H1 (cell line): ENCODE measurements at regions of chr11 and their contacts with region 1.

Region 1: GRCh38 chr11:92340839-92341238 is 116.2 kb downstream of the FAT3 start:
- DNase-seq: peak in 1 of 2 experiments; percentile 78
- H3K4me3 ChIP-seq: no peak overlapping the region
- H3K27ac ChIP-seq: no peak overlapping the region
- H3K4me1 ChIP-seq: no peaks in the 10 kb centered on the region
- H3K27me3 ChIP-seq: no peaks in the 10 kb centered on the region
- CTCF ChIP-seq: peak; percentile 66 to 86 (median 70)
- EP300 ChIP-seq: no peak
- POLR2A ChIP-seq: no peak
- RAD21 ChIP-seq: peak; percentile 68 to 78

Region 2: DNA sequence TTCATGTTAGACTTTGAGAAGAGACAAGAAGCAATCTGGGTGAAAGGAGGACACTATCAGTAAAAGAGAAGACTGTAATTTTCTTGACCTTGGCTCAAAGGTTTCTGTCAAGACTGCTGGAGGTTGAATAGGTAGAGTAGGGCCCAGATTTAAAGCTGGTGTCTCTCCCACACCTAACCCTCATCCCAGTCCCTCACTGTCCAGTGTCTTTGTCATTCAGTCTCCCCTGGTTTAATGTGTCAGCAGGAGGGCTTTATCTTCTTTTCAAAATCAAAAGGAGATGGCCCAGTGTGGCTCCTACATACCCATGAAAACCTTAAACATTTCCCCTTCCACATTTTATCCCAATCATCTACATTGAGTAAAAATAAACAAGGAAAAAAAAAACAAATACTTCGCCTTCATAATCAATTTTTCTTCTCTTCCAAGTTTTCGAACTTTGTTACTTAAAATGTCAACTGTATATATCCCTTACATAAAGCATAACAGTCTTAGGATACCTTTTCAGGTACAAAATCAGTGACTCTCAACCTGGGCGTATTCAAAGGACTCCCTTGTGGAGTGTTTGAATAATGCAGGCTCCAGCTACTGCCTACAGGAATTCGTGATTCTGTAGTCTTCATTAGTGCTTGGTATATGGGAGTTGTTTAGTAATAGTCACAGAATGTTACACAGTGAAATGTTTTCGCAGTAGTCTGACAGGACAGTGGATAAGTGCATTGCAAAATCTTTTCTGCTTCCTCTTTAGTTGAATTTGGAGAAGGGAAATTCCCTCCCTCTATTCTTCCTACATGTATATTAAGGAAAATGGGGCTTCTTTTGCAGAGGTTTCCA is 29.0 kb before region 1 on chr11:
- CTCF ChIA-PET with region 1: interaction called, 11 read pairs
- POLR2A ChIA-PET with region 1: interaction called, 3 read pairs
- DNase-seq: peak in 1 of 2 experiments; percentile 39
- H3K4me3 ChIP-seq: peak overlapping the region in 1 of 4 experiments; percentile 46; a peak in 2 of 8 replicates
- H3K27ac ChIP-seq: no peak overlapping the region
- H3K4me1 ChIP-seq: peaks cover 2 to 46% (median 36%) of the 10 kb centered on the region in 4 experiments
- H3K27me3 ChIP-seq: no peaks in the 10 kb centered on the region
- CTCF ChIP-seq: peak in 2 of 3 experiments; percentile 25 to 53; a peak in 2 of 4 replicates
- EP300 ChIP-seq: peak in 1 of 2 experiments; percentile 12; a peak in 1 of 3 replicates
- POLR2A ChIP-seq: no peak
- RAD21 ChIP-seq: peak; percentile 26 to 43; a peak in 3 of 4 replicates

Region 3: DNA sequence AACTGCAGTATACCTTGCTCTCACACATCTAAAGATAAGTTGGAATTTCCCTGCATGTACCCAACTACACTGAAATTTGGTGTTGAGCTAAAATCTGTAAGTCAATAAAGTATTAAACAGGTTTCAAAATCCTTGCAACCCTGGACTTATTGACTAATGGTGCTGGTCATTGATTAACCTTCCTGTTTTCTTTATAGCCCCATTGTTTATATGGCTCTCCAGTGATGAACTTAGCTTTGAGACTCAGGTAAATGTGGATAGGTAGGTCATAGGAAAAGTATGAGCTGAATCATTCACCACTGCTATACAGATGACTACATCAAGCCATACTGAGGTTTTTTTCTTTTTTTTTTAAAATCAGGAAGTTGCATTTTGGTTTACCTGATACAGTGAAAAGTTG is 16.5 kb after region 1 on chr11:
- CTCF ChIA-PET with region 1: interaction called, 21 read pairs
- POLR2A ChIA-PET with region 1: no interaction called
- DNase-seq: no peak
- H3K4me3 ChIP-seq: no peak overlapping the region
- H3K27ac ChIP-seq: no peak overlapping the region
- H3K4me1 ChIP-seq: 0 out of 7 replicates have a peak, but pooled peaks cover 0 to 2% (median 0%) of the 10 kb centered on the region in 4 experiments
- H3K27me3 ChIP-seq: no peaks in the 10 kb centered on the region
- CTCF ChIP-seq: no peak
- EP300 ChIP-seq: no peak
- POLR2A ChIP-seq: no peak
- RAD21 ChIP-seq: no peak

Region 4: GRCh38 chr11:92376146-92376599 is 35.3 kb after region 1 on chr11:
- CTCF ChIA-PET with region 1: interaction called, 11 read pairs
- POLR2A ChIA-PET with region 1: no interaction called
- DNase-seq: no peak
- H3K4me3 ChIP-seq: no peak overlapping the region
- H3K27ac ChIP-seq: no peak overlapping the region
- H3K4me1 ChIP-seq: peaks cover 0 to 7% (median 1%) of the 10 kb centered on the region in 4 experiments; a peak in 1 of 7 replicates
- H3K27me3 ChIP-seq: no peaks in the 10 kb centered on the region
- CTCF ChIP-seq: no peak
- EP300 ChIP-seq: no peak
- POLR2A ChIP-seq: no peak
- RAD21 ChIP-seq: no peak

Region 5: DNA sequence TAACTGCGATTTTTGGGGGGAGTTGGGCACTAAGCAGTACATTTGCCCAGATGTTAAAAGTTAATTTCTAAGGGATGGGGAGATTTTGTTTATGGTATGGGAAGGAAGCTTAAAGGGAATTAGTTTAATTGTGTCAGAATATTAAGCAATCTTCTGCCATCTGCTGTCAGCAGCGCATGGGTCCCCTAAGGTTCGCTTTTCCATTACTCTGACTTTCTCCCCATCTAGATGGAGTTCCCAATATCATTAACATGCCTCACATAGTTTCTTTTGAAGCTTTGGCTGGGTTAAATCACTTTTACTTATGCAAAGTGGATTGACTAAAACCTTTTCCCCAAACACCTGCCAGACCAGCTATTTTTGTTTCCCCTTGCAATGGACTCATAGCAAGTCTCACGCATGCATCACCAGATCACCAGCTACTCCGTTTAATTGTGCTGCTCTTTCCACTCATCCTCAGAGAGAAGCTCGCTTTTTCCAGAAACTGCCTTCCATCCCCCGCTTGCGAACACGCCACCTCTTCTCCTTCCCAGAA is 56.4 kb after region 1 on chr11:
- CTCF ChIA-PET with region 1: interaction called, 10 read pairs
- POLR2A ChIA-PET with region 1: no interaction called
- DNase-seq: no peak
- H3K4me3 ChIP-seq: no peak overlapping the region
- H3K27ac ChIP-seq: no peak overlapping the region
- H3K4me1 ChIP-seq: peaks cover 2 to 7% (median 3%) of the 10 kb centered on the region in 4 experiments; a peak in 4 of 7 replicates
- H3K27me3 ChIP-seq: no peaks in the 10 kb centered on the region
- CTCF ChIP-seq: 0 out of 4 replicates have a peak, but pooled peaks of 1 of the 3 experiments have one; percentile 3
- EP300 ChIP-seq: no peak
- POLR2A ChIP-seq: no peak
- RAD21 ChIP-seq: peak; percentile 13 to 33; a peak in 3 of 4 replicates

Region 6: DNA sequence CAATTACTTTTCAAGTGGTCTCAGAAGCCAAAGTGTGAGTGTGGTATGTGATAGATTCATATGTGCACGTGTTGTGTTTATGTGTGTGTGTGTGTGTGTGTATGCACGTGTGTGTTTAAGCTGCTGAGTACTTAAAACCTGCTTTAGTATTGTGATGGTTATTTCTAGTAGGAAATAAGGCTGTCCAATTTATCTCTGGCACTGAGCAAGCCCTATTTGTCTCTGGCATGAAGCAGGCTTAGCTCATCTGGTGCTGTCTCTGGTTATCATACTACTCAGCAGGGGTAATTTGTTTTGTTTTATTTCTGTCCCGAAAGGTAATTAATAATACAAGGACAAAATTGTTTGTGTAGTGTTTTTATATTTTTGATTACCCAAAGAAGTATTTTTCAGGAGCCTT is 217.5 kb after region 1 on chr11:
- CTCF ChIA-PET with region 1: no interaction called
- POLR2A ChIA-PET with region 1: no interaction called
- DNase-seq: no peak
- H3K4me3 ChIP-seq: no peak overlapping the region
- H3K27ac ChIP-seq: no peak overlapping the region
- H3K4me1 ChIP-seq: no peaks in the 10 kb centered on the region
- H3K27me3 ChIP-seq: no peaks in the 10 kb centered on the region
- CTCF ChIP-seq: no peak
- EP300 ChIP-seq: no peak
- POLR2A ChIP-seq: no peak
- RAD21 ChIP-seq: no peak